ENCODE measurements at regions of chr4 and their contacts with region 1.

Region 1: GRCh38 chr4:2418650-2419571 is at the start of gene CFAP99:
- DNase-seq: peak; percentile 97 to 99 (median 98)
- ATAC-seq: peak; percentile 87
- H3K4me3 ChIP-seq: peak within 1 kb of the TSS; percentile 52 to 56
- H3K4me3 Mint-ChIP-seq: peak within 1 kb of the TSS; percentile 87
- H3K27ac ChIP-seq: peak within 1 kb of the TSS; percentile 73 to 76
- H3K27ac Mint-ChIP-seq: peak within 1 kb of the TSS; percentile 94
- H3K4me1 ChIP-seq: peaks cover 43% of the 10 kb centered on the region
- H3K4me1 Mint-ChIP-seq: peaks cover 44% of the 10 kb centered on the region
- H3K27me3 ChIP-seq: peaks cover 6 to 10% of the 10 kb centered on the region in 2 experiments
- H3K27me3 Mint-ChIP-seq: peaks cover 14% of the 10 kb centered on the region
- CTCF ChIP-seq: peak; percentile 58
- total RNA-seq, gene CFAP99: 0.22 to 0.36 TPM

Region 2: DNA sequence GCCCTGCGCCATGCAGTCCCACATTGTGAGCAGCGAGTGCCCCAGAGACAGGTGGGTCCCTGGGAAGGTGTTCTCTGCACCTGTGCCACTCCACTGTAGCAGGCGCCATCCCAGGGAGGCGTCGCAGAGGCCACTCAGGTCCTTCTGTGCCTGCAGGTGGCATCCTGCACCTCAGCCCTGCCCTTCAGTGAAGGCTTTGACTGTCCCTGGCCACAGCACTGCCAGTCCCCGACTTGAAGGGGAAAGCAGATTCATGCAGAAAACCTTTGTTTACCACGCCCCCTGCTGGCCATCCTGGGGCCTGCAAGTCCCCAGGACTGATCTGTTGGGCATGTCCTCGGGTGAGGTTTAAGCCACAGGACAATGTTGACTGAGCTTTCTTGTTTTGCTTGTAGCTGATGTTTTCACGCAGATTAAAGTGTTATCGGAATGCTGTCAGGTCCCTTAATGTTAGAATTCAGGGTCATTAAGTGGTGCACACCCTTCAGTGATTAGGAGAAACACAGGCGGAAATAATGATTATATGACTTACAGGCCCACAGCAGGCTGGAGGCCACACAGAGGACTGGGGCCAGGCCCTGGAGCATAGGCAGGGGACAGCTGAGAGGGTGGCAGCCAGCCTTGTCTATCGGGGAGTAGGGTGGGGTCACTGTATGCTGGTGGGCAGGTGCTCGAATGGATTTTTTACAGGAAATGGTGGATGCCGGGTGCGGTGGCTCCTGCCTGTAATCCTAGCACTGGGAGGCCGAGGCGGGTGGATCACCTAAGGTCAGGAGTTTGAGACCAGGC is 692.6 kb before region 1 on chr4:
- CTCF ChIA-PET with region 1: no interaction called
- POLR2A ChIA-PET with region 1: no interaction called
- intact Hi-C with region 1: no loop called
- DNase-seq: peak; percentile 82 to 96 (median 88)
- ATAC-seq: peak; percentile 32
- H3K4me3 ChIP-seq: no peak overlapping the region
- H3K4me3 Mint-ChIP-seq: peak overlapping the region; percentile 50
- H3K27ac ChIP-seq: no peak overlapping the region
- H3K27ac Mint-ChIP-seq: peak overlapping the region; percentile 80
- H3K4me1 ChIP-seq: peaks cover 58% of the 10 kb centered on the region
- H3K4me1 Mint-ChIP-seq: peaks cover 61% of the 10 kb centered on the region
- H3K27me3 ChIP-seq: no peaks in the 10 kb centered on the region
- H3K27me3 Mint-ChIP-seq: no peaks in the 10 kb centered on the region
- CTCF ChIP-seq: peak; percentile 93

Region 3: GRCh38 chr4:1870578-1871443 is 548.1 kb before region 1 on chr4 and contains the start of gene NSD2:
- CTCF ChIA-PET with region 1: no interaction called
- POLR2A ChIA-PET with region 1: no interaction called
- intact Hi-C with region 1: loop called in 1 of 2 experiments (anchors 5 kb)
- DNase-seq: peak; percentile 81 to 97 (median 88)
- ATAC-seq: peak; percentile 64
- H3K4me3 ChIP-seq: peak within 1 kb of the TSS; percentile 66 to 98
- H3K4me3 Mint-ChIP-seq: peak within 1 kb of the TSS; percentile 83
- H3K27ac ChIP-seq: peak within 1 kb of the TSS; percentile 81 to 98
- H3K27ac Mint-ChIP-seq: peak within 1 kb of the TSS; percentile 89
- H3K4me1 ChIP-seq: peaks cover 21% of the 10 kb centered on the region
- H3K4me1 Mint-ChIP-seq: peaks cover 31% of the 10 kb centered on the region
- H3K27me3 ChIP-seq: no peaks in the 10 kb centered on the region
- H3K27me3 Mint-ChIP-seq: no peaks in the 10 kb centered on the region
- CTCF ChIP-seq: no peak
- total RNA-seq, gene NSD2: 27.3 to 32.5 TPM

Region 4: DNA sequence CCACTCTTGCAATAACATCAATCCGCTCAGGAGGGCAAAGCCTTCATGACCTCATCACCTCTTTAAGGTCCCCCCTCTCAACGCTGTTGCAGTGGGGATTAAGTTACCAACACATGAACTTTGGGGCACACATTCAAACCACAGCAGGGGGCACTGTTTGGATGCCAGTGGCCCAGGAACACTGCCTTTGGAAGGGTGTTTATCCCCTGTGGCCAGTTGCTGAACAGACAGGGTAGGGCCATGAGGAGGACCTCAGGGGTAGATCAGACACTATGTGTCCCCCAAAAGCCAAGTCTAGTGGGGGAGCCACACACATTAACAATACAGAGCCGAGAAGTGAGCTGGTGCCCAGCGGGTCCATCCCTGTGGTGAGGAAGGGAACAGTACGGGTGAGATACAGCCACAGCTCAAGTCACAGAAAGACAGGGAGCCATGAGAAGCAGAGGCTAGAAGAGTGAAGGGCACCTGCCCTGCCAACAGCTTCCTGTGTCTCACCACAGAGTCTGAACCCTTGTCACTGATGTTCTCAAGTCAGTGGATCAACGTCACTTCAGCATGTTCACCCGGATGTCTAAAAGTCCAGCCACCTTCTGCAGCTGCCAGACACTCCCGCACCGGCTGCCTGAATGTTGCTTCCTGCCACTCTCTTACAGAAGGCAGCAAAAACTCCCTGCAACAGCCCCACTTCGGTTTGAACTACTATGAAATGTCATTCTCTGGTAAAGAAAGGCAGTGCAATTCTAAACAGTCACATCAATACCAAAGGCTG is 137.2 kb before region 1 on chr4:
- CTCF ChIA-PET with region 1: interaction called, 3 read pairs
- POLR2A ChIA-PET with region 1: interaction called, 10 read pairs
- intact Hi-C with region 1: loop called in 1 of 2 experiments (anchors 1 kb)
- DNase-seq: peak; percentile 73 to 98 (median 85)
- ATAC-seq: peak; percentile 83
- H3K4me3 ChIP-seq: peak overlapping the region in 1 of 2 experiments; percentile 30
- H3K4me3 Mint-ChIP-seq: peak overlapping the region; percentile 78
- H3K27ac ChIP-seq: peak overlapping the region; percentile 67 to 94
- H3K27ac Mint-ChIP-seq: peak overlapping the region; percentile 99
- H3K4me1 ChIP-seq: peaks cover 46% of the 10 kb centered on the region
- H3K4me1 Mint-ChIP-seq: peaks cover 41% of the 10 kb centered on the region
- H3K27me3 ChIP-seq: no peaks in the 10 kb centered on the region
- H3K27me3 Mint-ChIP-seq: no peaks in the 10 kb centered on the region
- CTCF ChIP-seq: peak; percentile 72

Region 5: DNA sequence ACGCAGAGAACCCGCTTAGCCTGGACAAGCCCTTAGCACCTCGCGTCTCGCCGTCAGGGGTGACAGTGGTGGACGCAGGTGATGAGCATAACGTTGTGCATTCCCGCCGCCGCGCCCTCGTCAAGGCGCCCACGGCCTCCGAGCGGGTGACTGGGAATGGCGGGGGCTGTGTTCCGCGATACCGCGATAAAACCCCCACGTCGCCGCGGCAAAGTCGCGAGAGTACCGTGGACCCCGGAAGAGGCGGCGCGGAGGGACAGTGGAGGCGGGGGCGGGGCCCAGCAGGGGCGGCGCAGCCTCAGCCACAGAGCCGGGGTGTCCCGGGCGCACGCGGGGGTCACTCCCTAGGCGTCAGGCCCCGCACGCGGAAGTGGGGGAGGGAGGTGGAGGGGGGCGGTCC is 54.3 kb before region 1 on chr4:
- CTCF ChIA-PET with region 1: no interaction called
- POLR2A ChIA-PET with region 1: interaction called, 3 read pairs
- intact Hi-C with region 1: loop called in 1 of 2 experiments (anchors 2 kb)
- DNase-seq: peak; percentile 32 to 83 (median 60)
- ATAC-seq: peak; percentile 85
- H3K4me3 ChIP-seq: peak overlapping the region; percentile 69 to 74
- H3K4me3 Mint-ChIP-seq: peak overlapping the region; percentile 75
- H3K27ac ChIP-seq: peak overlapping the region; percentile 52 to 65
- H3K27ac Mint-ChIP-seq: peak overlapping the region; percentile 83
- H3K4me1 ChIP-seq: peaks cover 19% of the 10 kb centered on the region
- H3K4me1 Mint-ChIP-seq: peaks cover 13% of the 10 kb centered on the region
- H3K27me3 ChIP-seq: no peaks in the 10 kb centered on the region
- H3K27me3 Mint-ChIP-seq: no peaks in the 10 kb centered on the region
- CTCF ChIP-seq: no peak

Region 6: DNA sequence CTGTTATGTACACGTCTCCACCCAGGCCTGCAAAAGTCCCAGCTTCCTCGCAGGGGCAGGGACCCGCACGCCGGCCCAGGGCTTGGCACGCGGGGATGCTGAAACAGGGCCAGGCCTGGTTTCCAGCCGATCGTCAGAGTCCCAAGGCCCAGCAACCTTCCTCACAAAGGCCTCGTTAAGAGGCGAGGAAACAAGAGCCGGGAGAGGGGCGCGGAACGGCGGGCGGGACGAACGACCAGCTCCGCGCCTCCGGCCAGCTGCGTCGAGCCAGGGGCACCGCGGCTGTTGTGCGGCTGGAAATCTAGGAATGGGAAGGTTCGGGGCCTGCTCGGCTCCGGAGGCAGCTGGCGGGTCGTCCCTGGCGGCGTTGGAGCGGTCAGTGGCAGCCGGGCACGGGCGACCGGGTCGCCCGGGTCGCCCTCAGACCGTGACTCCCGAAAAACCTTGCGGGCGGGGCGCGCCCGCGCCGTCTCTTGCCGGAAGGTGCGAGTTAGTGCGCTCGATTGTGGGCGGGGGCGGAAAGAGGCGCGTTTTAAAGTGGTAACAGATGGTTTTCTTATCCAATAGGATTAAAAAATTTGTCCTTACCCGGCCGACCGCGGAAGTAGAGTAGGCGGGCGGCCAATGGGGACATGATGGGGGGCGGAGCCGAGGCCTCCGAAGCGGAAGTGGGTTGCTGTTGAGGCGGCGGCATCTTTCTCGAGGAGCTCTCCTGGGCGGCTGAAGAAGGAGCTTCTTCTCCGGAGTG is 49.7 kb after region 1 on chr4 and contains the start of gene RNF4:
- CTCF ChIA-PET with region 1: interaction called, 4 read pairs
- POLR2A ChIA-PET with region 1: interaction called, 9 read pairs
- intact Hi-C with region 1: loop called (anchors 1 to 2 kb)
- DNase-seq: peak; percentile 90 to 98 (median 94)
- ATAC-seq: peak; percentile 82
- H3K4me3 ChIP-seq: peak within 1 kb of the TSS; percentile 54 to 91
- H3K4me3 Mint-ChIP-seq: peak within 1 kb of the TSS; percentile 96
- H3K27ac ChIP-seq: peak within 1 kb of the TSS; percentile 95 to 97
- H3K27ac Mint-ChIP-seq: peak within 1 kb of the TSS; percentile 98
- H3K4me1 ChIP-seq: peaks cover 42% of the 10 kb centered on the region
- H3K4me1 Mint-ChIP-seq: peaks cover 45% of the 10 kb centered on the region
- H3K27me3 ChIP-seq: no peaks in the 10 kb centered on the region
- H3K27me3 Mint-ChIP-seq: no peaks in the 10 kb centered on the region
- CTCF ChIP-seq: no peak
- total RNA-seq, gene RNF4: 130 to 134 TPM

Region 7: DNA sequence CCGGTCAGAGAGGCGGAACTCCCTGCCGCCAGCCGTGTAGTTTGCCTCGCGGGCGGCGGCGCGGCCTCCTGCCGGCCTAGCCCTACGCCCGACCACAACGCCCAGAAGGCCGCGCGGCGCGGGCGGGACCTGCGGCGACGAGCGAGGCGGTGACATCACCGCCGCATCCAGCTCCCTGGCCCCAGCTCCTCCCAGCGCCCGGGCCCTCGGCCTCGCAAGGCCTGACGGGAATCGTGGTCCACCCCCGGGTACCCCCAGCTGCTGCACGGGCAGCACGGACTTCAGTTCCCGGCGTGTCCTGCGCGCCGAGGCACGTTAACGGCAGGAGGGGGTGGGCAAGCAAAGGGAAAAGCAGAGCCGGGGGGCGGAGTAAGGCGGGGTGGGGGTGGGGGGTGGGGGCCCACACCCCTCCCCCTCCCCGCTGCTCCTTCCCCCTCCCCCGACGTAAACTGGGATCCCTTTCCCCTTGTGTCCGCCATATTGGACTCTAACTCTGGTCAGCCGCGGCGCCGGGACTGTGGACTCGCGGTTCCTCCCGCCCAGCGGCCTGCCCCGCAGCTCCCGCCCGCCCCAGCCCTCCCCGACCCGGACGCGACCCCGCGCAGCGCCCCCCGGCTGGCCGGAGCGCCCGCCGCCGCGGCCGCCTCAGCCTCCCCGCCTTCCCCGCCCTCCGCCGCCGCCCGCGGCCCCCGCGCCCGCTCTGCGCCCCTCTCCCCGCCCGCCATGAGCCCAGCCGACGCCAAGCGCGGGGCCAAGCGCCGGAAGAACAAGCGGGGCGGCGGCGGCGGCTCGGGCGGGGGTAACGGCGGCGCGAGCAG is 117.5 kb after region 1 on chr4 and contains the start of gene FAM193A:
- CTCF ChIA-PET with region 1: no interaction called
- POLR2A ChIA-PET with region 1: interaction called, 3 read pairs
- intact Hi-C with region 1: loop called in 1 of 2 experiments (anchors 1 kb)
- DNase-seq: peak; percentile 97 to 100 (median 99)
- ATAC-seq: peak; percentile 94
- H3K4me3 ChIP-seq: peak within 1 kb of the TSS; percentile 64 to 67
- H3K4me3 Mint-ChIP-seq: peak within 1 kb of the TSS; percentile 90
- H3K27ac ChIP-seq: peak within 1 kb of the TSS; percentile 71 to 76
- H3K27ac Mint-ChIP-seq: peak within 1 kb of the TSS; percentile 92
- H3K4me1 ChIP-seq: peaks cover 26% of the 10 kb centered on the region
- H3K4me1 Mint-ChIP-seq: peaks cover 29% of the 10 kb centered on the region
- H3K27me3 ChIP-seq: no peaks in the 10 kb centered on the region
- H3K27me3 Mint-ChIP-seq: no peaks in the 10 kb centered on the region
- CTCF ChIP-seq: no peak
- total RNA-seq, gene FAM193A: 29.0 to 30.2 TPM